Calu3 (cell line): ENCODE measurements at regions of chr5 and their contacts with region 1.

Region 1: DNA sequence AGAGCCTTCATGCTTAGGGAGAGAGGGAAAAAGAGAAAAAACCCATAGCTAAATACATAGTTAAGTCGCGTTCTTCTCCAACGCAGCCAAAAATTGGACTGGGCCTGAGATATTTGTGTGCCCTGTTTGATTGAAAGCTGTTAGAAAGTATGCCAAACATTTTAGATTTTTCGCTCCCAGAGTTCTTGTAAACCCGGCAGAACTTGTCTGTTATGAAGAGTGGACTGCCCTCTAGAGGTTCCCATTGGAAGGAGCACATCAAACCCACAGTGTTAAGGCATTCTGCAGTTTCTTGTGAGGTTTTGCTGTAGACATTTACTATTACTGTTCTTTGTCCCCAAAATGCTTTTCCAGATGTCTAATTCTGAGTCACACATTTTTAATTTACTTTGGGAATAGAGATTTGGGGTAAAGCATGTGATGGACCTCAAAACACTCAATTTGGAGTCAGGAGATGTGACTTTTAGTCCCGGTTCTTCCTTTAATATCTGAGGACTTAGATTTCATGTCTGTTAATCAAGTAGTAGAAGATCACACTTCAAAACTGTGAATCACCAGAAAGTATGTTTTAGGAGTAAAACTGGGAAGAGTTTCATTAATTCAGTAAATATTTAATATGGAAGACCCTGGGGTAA is 96.6 kb downstream of the PCSK1 start:
- DNase-seq: peak; percentile 77
- H3K4me3 Mint-ChIP-seq: no peak overlapping the region
- H3K27ac Mint-ChIP-seq: no peak overlapping the region
- H3K4me1 Mint-ChIP-seq: peaks cover 29% of the 10 kb centered on the region
- H3K27me3 Mint-ChIP-seq: no peaks in the 10 kb centered on the region
- CTCF ChIP-seq: peak; percentile 76

Region 2: DNA sequence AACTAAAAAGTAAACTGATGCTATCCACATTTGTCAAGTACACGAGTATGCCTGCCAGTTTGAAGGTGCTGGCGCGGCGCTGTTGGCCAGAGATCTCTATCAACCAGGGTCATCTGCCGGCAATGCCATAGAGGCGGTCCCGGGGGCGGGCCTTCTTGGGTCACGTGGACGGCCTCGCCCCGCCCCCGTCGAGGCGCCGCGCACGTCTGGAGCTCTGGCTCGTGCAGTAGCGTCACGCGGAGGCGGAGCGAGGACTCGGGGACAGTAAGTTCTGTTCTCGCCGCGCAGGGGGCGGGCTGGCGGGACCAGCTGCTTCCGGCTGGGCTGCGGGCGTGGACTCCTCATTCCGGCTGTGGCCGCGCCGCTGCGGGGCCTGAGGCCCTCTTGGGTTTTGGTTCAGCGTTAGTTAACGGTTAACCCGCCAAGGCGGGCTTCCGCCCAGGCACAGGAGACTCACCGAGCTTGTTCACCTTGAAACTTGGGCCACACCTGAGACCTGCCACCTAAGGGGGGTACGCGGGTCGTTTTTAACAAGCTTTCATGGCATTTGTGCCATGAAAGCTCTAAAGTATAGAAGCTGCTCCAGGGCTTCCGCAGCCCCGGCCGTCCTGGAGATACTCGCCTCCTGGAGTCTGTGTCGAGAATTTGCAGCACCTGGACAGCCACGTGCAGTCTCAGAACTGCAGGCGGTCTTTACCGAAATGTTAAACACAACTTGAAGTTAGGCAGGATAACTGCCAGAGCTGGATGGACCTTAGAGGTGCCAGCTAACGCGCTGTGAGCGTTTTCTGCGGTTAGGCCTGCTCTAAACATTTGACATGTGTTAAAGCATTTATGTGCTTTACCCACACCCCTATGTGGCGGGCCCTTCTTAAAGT is 689.7 kb before region 1 on chr5 and contains the start of gene RFESD:
- CTCF ChIA-PET with region 1: no interaction called
- intact Hi-C with region 1: loop called (anchors 5 kb)
- DNase-seq: peak; percentile 100
- H3K4me3 Mint-ChIP-seq: peak within 1 kb of the TSS; percentile 80
- H3K27ac Mint-ChIP-seq: peak within 1 kb of the TSS; percentile 75
- H3K4me1 Mint-ChIP-seq: peaks cover 18% of the 10 kb centered on the region
- H3K27me3 Mint-ChIP-seq: no peaks in the 10 kb centered on the region
- CTCF ChIP-seq: peak; percentile 47
- total RNA-seq, gene RFESD: 1.8 and 2.9 TPM in 2 replicates

Region 3: DNA sequence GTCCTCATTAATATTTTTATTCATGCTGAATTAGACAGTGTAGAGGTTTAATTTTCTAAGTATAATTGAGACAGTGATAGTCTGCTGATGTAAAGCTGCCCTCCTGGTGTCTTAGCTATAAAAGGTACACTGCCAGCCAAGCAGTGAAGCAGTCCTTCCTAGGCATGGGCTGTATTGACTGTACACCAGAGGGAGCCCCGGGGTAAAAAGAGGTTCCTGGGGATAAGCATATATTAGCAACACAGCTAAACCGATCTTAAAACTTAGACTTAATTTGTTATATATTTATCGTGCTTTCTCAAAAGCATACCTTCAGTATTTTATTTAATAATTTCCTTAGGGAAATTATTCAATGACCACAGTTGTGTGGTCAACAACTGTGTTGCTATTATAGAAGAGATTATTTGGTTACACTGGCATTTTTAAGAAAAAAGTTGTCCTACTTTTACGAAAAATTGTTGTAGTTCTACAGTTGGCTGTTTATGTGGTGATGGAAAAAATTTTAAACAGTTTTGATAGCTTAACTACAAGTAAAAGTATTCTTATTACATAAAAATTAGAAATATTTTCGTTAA is 443.6 kb before region 1 on chr5:
- CTCF ChIA-PET with region 1: interaction called, 13 read pairs
- intact Hi-C with region 1: loop called (anchors 1 kb)
- DNase-seq: peak; percentile 74
- H3K4me3 Mint-ChIP-seq: no peak overlapping the region
- H3K27ac Mint-ChIP-seq: no peak overlapping the region
- H3K4me1 Mint-ChIP-seq: peaks cover 6% of the 10 kb centered on the region
- H3K27me3 Mint-ChIP-seq: no peaks in the 10 kb centered on the region
- CTCF ChIP-seq: peak; percentile 51

Region 4: DNA sequence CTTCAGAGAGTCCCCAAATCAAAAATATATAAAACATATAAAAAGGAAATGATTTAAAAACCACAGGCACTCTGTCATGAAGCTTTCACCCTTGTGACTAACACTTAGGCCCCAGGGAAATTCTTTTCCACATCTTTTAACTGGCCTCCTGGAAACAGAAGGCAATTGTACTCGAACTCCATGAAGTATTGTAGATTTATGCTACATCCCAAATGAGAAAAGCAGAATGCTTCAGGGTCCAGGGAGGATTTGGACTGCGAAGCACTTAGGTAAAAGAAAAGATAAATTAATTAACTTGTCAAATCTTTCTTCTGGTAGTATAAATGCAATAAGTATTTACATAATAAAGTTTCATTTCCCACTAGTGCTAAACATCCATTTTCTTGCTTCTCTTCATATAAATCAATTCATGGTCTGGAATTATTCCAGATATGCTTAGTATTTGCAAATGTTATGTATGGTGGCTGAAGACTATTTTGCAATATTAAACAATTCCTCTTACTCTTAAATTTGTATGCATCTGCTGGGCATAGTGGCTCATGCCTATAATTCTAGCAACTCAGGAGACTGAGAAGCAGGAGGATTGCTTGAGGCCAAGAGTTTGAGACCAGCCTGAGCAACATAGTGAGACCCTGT is 309.9 kb before region 1 on chr5:
- CTCF ChIA-PET with region 1: interaction called, 3 read pairs
- intact Hi-C with region 1: loop called (anchors 5 kb)
- DNase-seq: peak; percentile 31
- H3K4me3 Mint-ChIP-seq: no peak overlapping the region
- H3K27ac Mint-ChIP-seq: peak overlapping the region; percentile 89
- H3K4me1 Mint-ChIP-seq: peaks cover 42% of the 10 kb centered on the region
- H3K27me3 Mint-ChIP-seq: no peaks in the 10 kb centered on the region
- CTCF ChIP-seq: no peak

Region 5: GRCh38 chr5:96093890-96094381 is 242.5 kb before region 1 on chr5:
- CTCF ChIA-PET with region 1: interaction called, 4 read pairs
- intact Hi-C with region 1: loop called (anchors 1 kb)
- DNase-seq: peak; percentile 41
- H3K4me3 Mint-ChIP-seq: peak overlapping the region; percentile 0
- H3K27ac Mint-ChIP-seq: peak overlapping the region; percentile 68
- H3K4me1 Mint-ChIP-seq: peaks cover 46% of the 10 kb centered on the region
- H3K27me3 Mint-ChIP-seq: no peaks in the 10 kb centered on the region
- CTCF ChIP-seq: no peak

Region 6: DNA sequence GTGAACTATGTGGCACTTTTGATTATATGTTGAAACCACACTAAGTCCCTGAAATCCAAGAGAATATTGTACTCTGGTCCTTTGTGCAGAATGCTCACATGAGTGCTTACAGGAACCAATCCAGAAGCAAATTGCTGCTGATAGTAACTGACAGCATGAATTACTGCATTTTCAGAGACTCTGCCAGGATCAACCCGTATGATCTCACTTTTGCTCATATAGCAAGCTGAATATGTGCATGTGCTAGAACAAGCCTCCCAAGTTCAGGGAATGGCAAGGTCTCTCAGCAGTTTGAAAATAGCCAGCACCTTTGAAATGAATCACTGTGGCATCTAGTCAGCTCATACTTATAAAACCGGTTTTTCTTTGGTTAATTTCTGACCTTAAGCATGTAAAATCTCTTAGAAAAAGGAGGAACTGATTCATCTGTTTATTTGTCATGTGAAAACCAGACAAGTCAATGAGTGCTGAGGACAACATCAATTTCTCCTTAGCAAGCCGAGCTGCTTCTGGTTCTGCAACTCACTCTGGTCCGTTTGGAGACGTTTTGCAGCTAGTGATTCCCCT is 159.1 kb before region 1 on chr5:
- CTCF ChIA-PET with region 1: interaction called, 10 read pairs
- intact Hi-C with region 1: loop called (anchors 1 kb)
- DNase-seq: peak; percentile 55
- H3K4me3 Mint-ChIP-seq: peak overlapping the region; percentile 48
- H3K27ac Mint-ChIP-seq: peak overlapping the region; percentile 68
- H3K4me1 Mint-ChIP-seq: peaks cover 51% of the 10 kb centered on the region
- H3K27me3 Mint-ChIP-seq: no peaks in the 10 kb centered on the region
- CTCF ChIP-seq: no peak

Region 7: DNA sequence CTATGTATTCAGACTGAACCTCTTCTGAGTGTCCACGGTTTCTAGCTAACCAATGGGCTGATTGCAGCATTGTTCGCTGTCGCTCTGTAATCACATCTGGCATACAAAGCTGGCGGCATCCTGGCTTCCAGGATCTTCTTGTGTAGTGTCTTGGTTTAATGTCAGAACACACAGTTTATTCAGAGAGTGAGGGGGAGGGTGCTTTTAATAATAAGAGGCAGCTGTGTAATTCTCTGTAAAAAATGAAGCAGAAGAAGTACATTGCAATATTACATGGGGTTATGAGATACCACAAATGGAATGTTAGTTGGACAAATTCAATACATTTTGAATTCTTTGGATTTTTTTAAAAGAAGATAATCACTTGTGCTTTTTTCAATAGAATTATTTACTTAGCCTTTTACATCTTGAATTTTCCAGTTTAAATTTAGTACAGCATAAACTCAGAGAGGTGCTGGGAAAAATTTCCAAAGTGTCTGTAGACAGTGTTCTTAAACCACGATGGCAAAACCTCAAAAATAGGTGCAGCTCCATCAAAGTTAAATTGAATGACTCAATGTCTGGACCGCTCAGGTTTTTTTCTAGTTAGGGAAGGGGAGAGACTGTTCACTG is 109.4 kb before region 1 on chr5:
- CTCF ChIA-PET with region 1: no interaction called
- intact Hi-C with region 1: loop called (anchors 5 kb)
- DNase-seq: peak; percentile 14
- H3K4me3 Mint-ChIP-seq: peak overlapping the region; percentile 32
- H3K27ac Mint-ChIP-seq: peak overlapping the region; percentile 77
- H3K4me1 Mint-ChIP-seq: peaks cover 35% of the 10 kb centered on the region
- H3K27me3 Mint-ChIP-seq: no peaks in the 10 kb centered on the region
- CTCF ChIP-seq: no peak

Region 8: GRCh38 chr5:96427823-96428222 is 91.4 kb after region 1 on chr5:
- CTCF ChIA-PET with region 1: no interaction called
- intact Hi-C with region 1: no loop called
- DNase-seq: no peak
- H3K4me3 Mint-ChIP-seq: no peak overlapping the region
- H3K27ac Mint-ChIP-seq: no peak overlapping the region
- H3K4me1 Mint-ChIP-seq: no peaks in the 10 kb centered on the region
- H3K27me3 Mint-ChIP-seq: peaks cover 78% of the 10 kb centered on the region
- CTCF ChIP-seq: no peak

Region 9: GRCh38 chr5:96463106-96463505 is 126.6 kb after region 1 on chr5:
- CTCF ChIA-PET with region 1: no interaction called
- intact Hi-C with region 1: no loop called
- DNase-seq: no peak
- H3K4me3 Mint-ChIP-seq: no peak overlapping the region
- H3K27ac Mint-ChIP-seq: no peak overlapping the region
- H3K4me1 Mint-ChIP-seq: no peaks in the 10 kb centered on the region
- H3K27me3 Mint-ChIP-seq: peaks cover 39% of the 10 kb centered on the region
- CTCF ChIP-seq: no peak